Naive thymus-derived CD4-positive, alpha-beta T cell (primary cell): ENCODE measurements at regions of chr16 and their contacts with region 1.

Region 1: GRCh38 chr16:67979955-67980678 is at the start of gene DPEP3:
- DNase-seq: peak in 1 of 9 donors; percentile 15
- ATAC-seq: peak; percentile 35
- H3K4me3 ChIP-seq: no peak within 1 kb of the TSS
- H3K4me3 Mint-ChIP-seq: no peak within 1 kb of the TSS
- H3K27ac ChIP-seq: no peak within 1 kb of the TSS
- H3K27ac Mint-ChIP-seq: no peak within 1 kb of the TSS
- H3K4me1 ChIP-seq: peaks cover 9 to 23% of the 10 kb centered on the region in 2 donors
- H3K4me1 Mint-ChIP-seq: peaks cover 18 to 31% (median 26%) of the 10 kb centered on the region in 7 donors
- H3K27me3 ChIP-seq: no peaks in the 10 kb centered on the region
- H3K27me3 Mint-ChIP-seq: peaks cover 0 to 6% (median 0%) of the 10 kb centered on the region in 5 donors
- total RNA-seq, gene DPEP3: 0.10 to 2.3 (median 1.6) TPM

Region 2: DNA sequence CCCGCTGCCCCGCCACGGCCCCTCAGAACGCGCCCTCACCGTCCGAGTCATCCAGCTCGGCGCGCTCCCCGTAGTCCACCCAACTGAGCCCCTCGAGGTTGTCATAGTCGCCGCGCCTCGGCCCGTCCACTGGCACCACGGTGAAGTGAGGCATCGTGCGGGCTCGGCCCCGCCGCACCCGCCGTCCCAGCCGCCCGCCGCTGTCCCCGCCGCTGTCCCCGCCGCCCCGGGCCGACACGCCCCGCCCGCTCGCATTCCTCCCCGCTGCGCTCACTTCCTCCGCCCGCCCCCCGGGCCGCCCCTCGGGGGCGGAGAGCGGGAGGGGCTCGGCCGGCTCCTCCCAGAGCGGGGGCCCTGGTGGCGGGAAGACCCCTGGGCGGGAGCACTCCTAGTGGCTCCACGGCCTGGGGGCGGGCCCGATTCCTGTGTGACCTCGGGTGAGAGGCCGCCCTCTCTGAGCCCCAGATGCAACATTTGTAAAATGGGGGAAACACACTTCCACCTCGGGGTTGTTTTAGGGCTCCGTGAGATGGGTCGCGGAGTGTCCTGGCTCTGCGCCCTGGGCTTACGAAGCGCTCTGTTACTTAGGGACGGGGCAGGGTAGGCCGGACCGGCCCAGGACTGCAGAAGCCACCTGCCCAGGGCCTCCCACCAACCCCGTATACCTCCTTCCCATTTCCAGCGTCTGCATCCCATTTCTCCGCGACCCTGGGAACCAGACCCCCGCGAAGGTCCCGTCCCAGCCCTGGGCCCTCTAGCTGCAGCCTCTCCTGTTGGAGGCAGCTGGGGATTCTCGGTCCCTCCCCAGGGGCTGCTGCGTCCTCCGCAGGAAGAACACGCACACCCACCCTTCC is 11.5 kb before region 1 on chr16 and contains the start of gene SLC12A4:
- CTCF ChIA-PET with region 1: no interaction called
- POLR2A ChIA-PET with region 1: interaction called, 17 read pairs
- intact Hi-C with region 1: loop called (anchors 1 to 2 kb)
- DNase-seq: peak; percentile 74 to 96 (median 81)
- ATAC-seq: peak; percentile 97
- H3K4me3 ChIP-seq: peak within 1 kb of the TSS; percentile 88
- H3K4me3 Mint-ChIP-seq: peak within 1 kb of the TSS; percentile 86 to 100 (median 97)
- H3K27ac ChIP-seq: peak within 1 kb of the TSS; percentile 81
- H3K27ac Mint-ChIP-seq: peak within 1 kb of the TSS; percentile 89 to 95 (median 93)
- H3K4me1 ChIP-seq: peaks cover 10 to 14% of the 10 kb centered on the region in 2 donors
- H3K4me1 Mint-ChIP-seq: peaks cover 20 to 42% (median 29%) of the 10 kb centered on the region in 7 donors
- H3K27me3 ChIP-seq: no peaks in the 10 kb centered on the region
- H3K27me3 Mint-ChIP-seq: no peaks in the 10 kb centered on the region
- total RNA-seq, gene SLC12A4: 22.8 to 44.4 (median 31.3) TPM

Region 3: GRCh38 chr16:67999985-68000384 is 19.9 kb after region 1 on chr16:
- CTCF ChIA-PET with region 1: interaction called, 4 read pairs
- POLR2A ChIA-PET with region 1: interaction called, 32 read pairs
- intact Hi-C with region 1: no loop called
- DNase-seq: peak in 2 of 9 donors; percentile 27 to 39
- ATAC-seq: peak; percentile 34
- H3K4me3 ChIP-seq: peak overlapping the region; percentile 75
- H3K4me3 Mint-ChIP-seq: peak overlapping the region; percentile 80 to 94 (median 90)
- H3K27ac ChIP-seq: peak overlapping the region; percentile 64
- H3K27ac Mint-ChIP-seq: peak overlapping the region; percentile 84 to 99 (median 95)
- H3K4me1 ChIP-seq: peaks cover 29 to 47% of the 10 kb centered on the region in 2 donors
- H3K4me1 Mint-ChIP-seq: peaks cover 28 to 86% (median 57%) of the 10 kb centered on the region in 7 donors
- H3K27me3 ChIP-seq: no peaks in the 10 kb centered on the region
- H3K27me3 Mint-ChIP-seq: no peaks in the 10 kb centered on the region

Region 4: DNA sequence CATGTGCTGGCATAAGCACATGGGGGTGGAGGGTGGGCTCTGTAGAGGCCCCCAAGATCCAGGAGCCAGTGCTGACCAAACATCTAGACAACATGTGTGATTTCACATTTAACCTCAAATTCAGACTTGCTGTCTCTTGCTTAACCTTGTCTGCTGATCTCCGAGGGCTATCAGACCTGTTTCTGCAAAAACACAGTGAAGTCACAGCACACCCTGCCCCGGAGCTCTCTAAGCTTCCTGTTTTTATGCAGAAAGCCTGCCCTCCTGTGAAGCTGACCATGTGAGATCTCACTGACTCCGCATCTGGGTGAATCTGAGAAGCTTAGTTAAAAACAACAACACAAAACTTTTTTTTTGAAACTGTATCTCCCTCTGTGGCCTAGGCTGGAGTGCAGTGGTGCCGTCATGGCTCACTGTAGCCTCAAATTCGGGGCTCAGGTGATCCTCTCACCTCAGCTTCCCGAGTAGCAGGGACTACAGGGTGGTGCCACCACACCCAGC is 25.7 kb after region 1 on chr16:
- CTCF ChIA-PET with region 1: interaction called, 4 read pairs
- POLR2A ChIA-PET with region 1: interaction called, 32 read pairs
- intact Hi-C with region 1: no loop called
- DNase-seq: peak in 7 of 9 donors; percentile 37 to 87 (median 77)
- ATAC-seq: peak; percentile 99
- H3K4me3 ChIP-seq: peak overlapping the region; percentile 23
- H3K4me3 Mint-ChIP-seq: peak overlapping the region; percentile 40 to 85 (median 60)
- H3K27ac ChIP-seq: peak overlapping the region; percentile 50
- H3K27ac Mint-ChIP-seq: peak overlapping the region; percentile 91 to 100 (median 97)
- H3K4me1 ChIP-seq: peaks cover 28 to 45% of the 10 kb centered on the region in 2 donors
- H3K4me1 Mint-ChIP-seq: peaks cover 18 to 68% (median 44%) of the 10 kb centered on the region in 7 donors
- H3K27me3 ChIP-seq: no peaks in the 10 kb centered on the region
- H3K27me3 Mint-ChIP-seq: peaks cover 0 to 2% (median 0%) of the 10 kb centered on the region in 5 donors